ENCODE measurements at regions of chr9 and their contacts with region 1.

Region 1: GRCh38 chr9:79701651-79702050 is 129.9 kb downstream of the TLE4 start:
- DNase-seq: no peak
- H3K4me3 ChIP-seq: no peak overlapping the region
- CTCF ChIP-seq: no peak

Region 2: GRCh38 chr9:79129865-79130480 is 571.7 kb before region 1 on chr9:
- in situ Hi-C with region 1: loop called (anchors 25 kb)
- DNase-seq: peak; percentile 49
- H3K4me3 ChIP-seq: no peak overlapping the region
- CTCF ChIP-seq: peak; percentile 93